ENCODE measurements at regions of chr17 and their contacts with region 1.

Region 1: GRCh38 chr17:6473128-6473767 is 29.0 kb downstream of the PIMREG start:
- DNase-seq: peak; percentile 40
- ATAC-seq: peak; percentile 87
- H3K4me3 ChIP-seq: no peak overlapping the region
- H3K27ac ChIP-seq: no peak overlapping the region
- H3K4me1 ChIP-seq: peaks cover 12 to 18% of the 10 kb centered on the region in 2 experiments; a peak in 3 of 4 replicates
- H3K27me3 ChIP-seq: no peaks in the 10 kb centered on the region
- CTCF ChIP-seq: peak; percentile 68 to 97 (median 96); a peak in 5 of 6 replicates
- POLR2A ChIP-seq: no peak
- RAD21 ChIP-seq: peak; percentile 91

Region 2: GRCh38 chr17:6558932-6559752 is 85.9 kb after region 1 on chr17:
- CTCF ChIA-PET with region 1: no interaction called
- POLR2A ChIA-PET with region 1: no interaction called
- RAD21 ChIA-PET with region 1: no interaction called
- intact Hi-C with region 1: loop called (anchors 1 kb)
- DNase-seq: no peak
- ATAC-seq: no peak
- H3K4me3 ChIP-seq: no peak overlapping the region
- H3K27ac ChIP-seq: no peak overlapping the region
- H3K4me1 ChIP-seq: peaks cover 10 to 19% of the 10 kb centered on the region in 2 experiments
- H3K27me3 ChIP-seq: no peaks in the 10 kb centered on the region
- CTCF ChIP-seq: no peak
- POLR2A ChIP-seq: no peak
- RAD21 ChIP-seq: peak; percentile 53; the same call in 1 of the 2 replicates

Region 3: DNA sequence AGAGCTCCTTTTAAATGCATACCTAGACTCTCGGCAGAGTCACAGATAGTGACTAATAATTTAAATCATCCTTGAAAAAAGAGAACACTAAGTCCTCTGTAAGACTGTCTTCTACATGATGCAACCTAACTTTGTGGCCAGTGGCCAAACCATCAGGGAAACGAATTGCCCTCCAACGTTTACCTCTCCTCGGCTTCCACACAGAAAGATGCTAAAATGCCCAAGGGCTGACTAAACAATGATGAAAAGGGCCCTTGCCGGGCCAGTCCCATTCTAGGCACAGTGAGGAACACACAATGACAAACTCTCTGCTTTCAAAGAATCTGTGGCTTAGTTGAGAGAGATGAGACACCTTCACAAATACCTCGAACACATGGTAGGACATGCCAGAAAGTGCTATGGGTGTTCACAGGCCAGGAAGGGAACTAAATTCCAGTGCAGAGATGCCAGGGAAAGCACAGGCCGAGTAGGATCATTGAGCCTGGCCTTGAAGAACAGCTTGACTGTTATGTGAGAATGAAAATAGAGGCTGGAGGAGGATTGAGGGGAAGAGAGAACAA is 118.4 kb after region 1 on chr17:
- CTCF ChIA-PET with region 1: no interaction called
- POLR2A ChIA-PET with region 1: no interaction called
- RAD21 ChIA-PET with region 1: no interaction called
- intact Hi-C with region 1: no loop called
- DNase-seq: no peak
- ATAC-seq: no peak
- H3K4me3 ChIP-seq: no peak overlapping the region
- H3K27ac ChIP-seq: no peak overlapping the region
- H3K4me1 ChIP-seq: no peaks in the 10 kb centered on the region
- H3K27me3 ChIP-seq: no peaks in the 10 kb centered on the region
- CTCF ChIP-seq: no peak
- POLR2A ChIP-seq: no peak
- RAD21 ChIP-seq: no peak

Region 4: GRCh38 chr17:6640536-6641373 is 167.5 kb after region 1 on chr17 and contains the starts of genes KIAA0753 and TXNDC17:
- CTCF ChIA-PET with region 1: no interaction called
- POLR2A ChIA-PET with region 1: no interaction called
- RAD21 ChIA-PET with region 1: no interaction called
- intact Hi-C with region 1: loop called (anchors 2 kb)
- DNase-seq: peak; percentile 83
- ATAC-seq: peak; percentile 90
- H3K4me3 ChIP-seq: peak within 1 kb of the TSS; percentile 79 to 88
- H3K27ac ChIP-seq: peak within 1 kb of the TSS; percentile 94
- H3K4me1 ChIP-seq: peaks cover 13 to 29% of the 10 kb centered on the region in 2 experiments; a peak in 3 of 4 replicates
- H3K27me3 ChIP-seq: no peaks in the 10 kb centered on the region
- CTCF ChIP-seq: no peak
- POLR2A ChIP-seq: peak; percentile 91
- RAD21 ChIP-seq: no peak
- total RNA-seq, gene KIAA0753: 18.3 TPM
- total RNA-seq, gene TXNDC17: 121 TPM

Region 5: DNA sequence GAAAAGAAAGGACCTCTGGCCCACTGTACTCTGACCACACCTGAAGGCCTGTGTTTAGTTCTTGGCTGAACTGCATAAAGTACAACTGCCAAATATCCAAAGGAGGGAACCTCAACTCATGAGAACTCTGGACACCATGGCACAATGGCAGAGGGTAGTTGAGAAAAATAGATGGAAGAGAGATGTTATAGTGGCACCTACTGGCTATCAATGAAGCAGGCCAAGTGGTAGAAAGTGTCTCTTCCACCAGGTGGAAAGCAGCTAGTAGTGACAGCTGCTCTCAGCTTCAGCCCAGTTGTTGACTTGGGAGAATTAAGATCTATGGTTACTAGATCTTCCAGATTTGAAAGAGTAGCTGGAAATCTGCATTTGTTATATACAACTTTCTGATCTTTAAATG is 174.9 kb after region 1 on chr17:
- CTCF ChIA-PET with region 1: interaction called, 19 read pairs
- POLR2A ChIA-PET with region 1: no interaction called
- RAD21 ChIA-PET with region 1: interaction called in 1 of 2 experiments, 3 read pairs
- intact Hi-C with region 1: loop called (anchors 1 kb)
- DNase-seq: no peak
- ATAC-seq: peak; percentile 41
- H3K4me3 ChIP-seq: no peak overlapping the region
- H3K27ac ChIP-seq: no peak overlapping the region
- H3K4me1 ChIP-seq: peaks cover 11 to 19% of the 10 kb centered on the region in 2 experiments
- H3K27me3 ChIP-seq: no peaks in the 10 kb centered on the region
- CTCF ChIP-seq: peak in 2 of 3 experiments; percentile 51 to 62; a peak in 5 of 6 replicates
- POLR2A ChIP-seq: no peak
- RAD21 ChIP-seq: peak; percentile 66

Measured in HCT116 (cell line).